WTC11 (cell line): ENCODE measurements at regions of chr16 and their contacts with region 1.

Region 1: DNA sequence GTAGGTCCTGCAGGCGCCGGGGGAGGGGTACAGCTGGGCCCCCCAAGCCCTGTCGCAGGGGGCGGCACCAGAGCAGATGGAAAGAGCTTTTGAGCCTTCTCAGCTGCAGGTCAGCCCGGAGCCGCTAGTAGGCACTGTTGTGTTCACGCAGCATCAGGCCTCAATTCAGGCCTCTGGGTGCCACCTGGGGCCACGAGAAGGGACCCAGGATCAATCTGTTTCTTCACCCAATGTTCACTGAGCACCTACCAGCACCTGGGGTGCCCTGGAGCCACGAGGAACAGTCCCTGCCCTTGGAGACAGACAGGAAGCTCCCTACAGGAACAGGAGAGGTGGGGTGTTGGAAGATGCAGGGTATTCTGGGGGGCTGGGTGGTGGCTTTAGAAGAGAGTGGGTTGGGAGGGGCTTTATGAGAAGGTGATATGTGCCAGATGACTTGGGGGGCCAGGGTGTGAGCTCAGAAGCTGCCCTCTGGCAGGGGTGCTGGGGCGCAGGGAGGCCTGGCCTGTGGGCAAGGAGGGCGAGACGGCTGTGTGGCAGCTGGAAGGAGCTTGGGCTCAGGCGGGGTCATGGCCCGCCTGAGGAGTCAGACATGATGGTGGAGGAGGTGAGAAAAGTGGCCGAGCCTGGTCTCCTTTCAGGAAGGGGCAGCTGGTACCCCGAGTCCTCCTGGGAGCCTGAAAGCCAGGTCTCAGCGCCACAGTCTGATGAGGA is 121.9 kb upstream of the GSE1 start:
- DNase-seq: peak; percentile 78
- ATAC-seq: peak; percentile 66
- H3K4me3 Mint-ChIP-seq: no peak overlapping the region
- H3K27ac Mint-ChIP-seq: peak overlapping the region; percentile 90
- H3K4me1 Mint-ChIP-seq: peaks cover 17% of the 10 kb centered on the region
- H3K27me3 Mint-ChIP-seq: no peaks in the 10 kb centered on the region
- CTCF ChIP-seq: peak; percentile 86

Region 2: DNA sequence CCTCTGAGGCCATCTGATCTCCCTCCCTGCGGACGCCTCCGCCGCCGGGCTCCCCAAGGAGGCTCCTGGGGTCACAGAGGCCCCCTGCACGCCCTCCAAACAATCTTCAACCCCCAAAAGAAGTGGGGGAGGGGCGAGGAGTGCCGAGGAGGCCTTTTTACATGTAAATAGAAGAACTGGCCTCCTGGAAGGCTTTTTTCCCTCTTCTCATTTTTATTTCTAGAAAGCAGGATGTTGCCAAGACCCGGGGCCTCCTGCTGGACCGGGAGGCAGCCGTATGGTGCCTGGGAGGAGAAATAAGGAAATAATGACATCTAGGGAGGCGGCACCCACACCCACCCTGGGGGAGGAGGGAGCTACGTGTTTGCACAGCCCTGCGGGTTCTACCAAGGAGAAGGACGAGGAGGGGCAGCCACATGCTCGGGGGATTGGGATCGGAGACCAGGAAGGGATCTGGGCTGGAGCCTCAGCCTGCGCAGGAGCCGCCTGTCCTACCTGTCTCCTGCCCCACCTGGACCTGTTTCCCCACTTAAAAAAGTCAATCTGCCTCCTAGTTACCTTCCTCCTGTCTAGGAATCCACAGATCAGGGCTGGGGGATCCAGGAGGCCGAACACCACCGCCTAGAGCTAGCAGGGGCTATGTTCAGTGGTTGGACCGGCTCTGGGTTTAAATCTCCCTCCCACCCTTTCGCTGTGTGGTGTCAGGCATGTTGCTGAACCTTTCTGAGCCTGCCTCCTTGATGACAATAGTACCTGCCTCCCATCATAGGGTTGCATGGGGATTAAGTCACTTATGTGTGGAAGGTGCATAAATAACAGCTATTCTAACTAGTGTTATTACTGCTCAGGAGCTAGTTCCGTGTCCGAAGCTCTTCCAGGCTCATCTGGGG is 53.8 kb before region 1 on chr16:
- CTCF ChIA-PET with region 1: interaction called, 15 read pairs
- POLR2A ChIA-PET with region 1: no interaction called
- DNase-seq: no peak
- ATAC-seq: peak; percentile 21
- H3K4me3 Mint-ChIP-seq: peak overlapping the region; percentile 50
- H3K27ac Mint-ChIP-seq: peak overlapping the region; percentile 51; the same call in 1 of the 2 replicates
- H3K4me1 Mint-ChIP-seq: peaks cover 39% of the 10 kb centered on the region
- H3K27me3 Mint-ChIP-seq: no peaks in the 10 kb centered on the region
- CTCF ChIP-seq: no peak

Region 3: GRCh38 chr16:85473909-85474620 is 17.1 kb before region 1 on chr16:
- CTCF ChIA-PET with region 1: interaction called, 22 read pairs
- POLR2A ChIA-PET with region 1: no interaction called
- DNase-seq: no peak
- ATAC-seq: peak; percentile 52
- H3K4me3 Mint-ChIP-seq: no peak overlapping the region
- H3K27ac Mint-ChIP-seq: 0 out of 2 replicates have a peak overlapping the region, but pooled peaks have one; percentile 20
- H3K4me1 Mint-ChIP-seq: peaks cover 25% of the 10 kb centered on the region
- H3K27me3 Mint-ChIP-seq: 0 out of 2 replicates have a peak, but pooled peaks cover 2% of the 10 kb centered on the region
- CTCF ChIP-seq: no peak

Region 4: DNA sequence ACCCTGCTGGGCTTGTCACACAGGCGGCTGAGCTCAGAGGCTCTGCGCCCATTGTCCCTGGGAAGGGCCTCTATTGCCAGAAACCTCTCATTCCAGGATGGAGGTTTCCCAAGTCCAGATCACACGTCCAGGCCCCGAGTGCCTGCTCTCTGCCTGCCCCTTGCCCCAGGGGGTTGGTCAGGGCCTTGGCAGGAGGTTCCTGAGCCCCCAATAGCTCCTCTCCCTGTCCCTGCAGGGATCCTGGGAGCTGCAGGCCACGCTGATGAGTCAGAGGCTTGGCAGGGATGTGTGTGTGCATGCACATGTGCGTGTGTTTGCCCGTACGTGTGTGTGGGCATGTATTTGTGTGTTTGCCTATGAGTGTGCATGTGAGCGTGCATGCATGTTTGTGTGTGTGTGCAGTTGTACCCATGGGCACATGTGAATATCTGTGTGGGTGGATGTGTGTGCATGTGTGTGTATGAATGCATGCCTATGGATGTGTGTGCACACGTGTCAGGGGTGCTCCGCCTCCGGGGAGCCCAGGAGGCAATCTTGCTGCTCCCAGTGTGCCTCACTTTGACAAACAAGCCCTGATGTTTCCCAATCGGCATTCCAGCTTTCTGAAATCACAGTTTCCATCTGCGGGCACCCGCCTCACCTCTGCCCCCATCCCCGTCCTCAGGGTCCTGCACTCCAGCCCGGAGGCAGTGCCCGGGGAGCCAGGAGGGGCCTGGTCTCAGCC is 23.5 kb after region 1 on chr16:
- CTCF ChIA-PET with region 1: interaction called, 31 read pairs
- POLR2A ChIA-PET with region 1: no interaction called
- DNase-seq: no peak
- ATAC-seq: no peak
- H3K4me3 Mint-ChIP-seq: no peak overlapping the region
- H3K27ac Mint-ChIP-seq: peak overlapping the region; percentile 72; the same call in 1 of the 2 replicates
- H3K4me1 Mint-ChIP-seq: peaks cover 22% of the 10 kb centered on the region
- H3K27me3 Mint-ChIP-seq: no peaks in the 10 kb centered on the region
- CTCF ChIP-seq: no peak

Region 5: GRCh38 chr16:85601730-85602401 is 110.7 kb after region 1 on chr16:
- CTCF ChIA-PET with region 1: interaction called, 13 read pairs
- POLR2A ChIA-PET with region 1: no interaction called
- DNase-seq: no peak
- ATAC-seq: 0 out of 2 replicates have a peak, but pooled peaks have one; percentile 11
- H3K4me3 Mint-ChIP-seq: peak overlapping the region; percentile 9; the same call in 1 of the 2 replicates
- H3K27ac Mint-ChIP-seq: no peak overlapping the region
- H3K4me1 Mint-ChIP-seq: peaks cover 74% of the 10 kb centered on the region
- H3K27me3 Mint-ChIP-seq: no peaks in the 10 kb centered on the region
- CTCF ChIP-seq: no peak

Region 6: GRCh38 chr16:85675251-85675927 is 184.2 kb after region 1 on chr16:
- CTCF ChIA-PET with region 1: no interaction called
- POLR2A ChIA-PET with region 1: no interaction called
- DNase-seq: no peak
- ATAC-seq: peak; percentile 53
- H3K4me3 Mint-ChIP-seq: no peak overlapping the region
- H3K27ac Mint-ChIP-seq: no peak overlapping the region
- H3K4me1 Mint-ChIP-seq: no peaks in the 10 kb centered on the region
- H3K27me3 Mint-ChIP-seq: no peaks in the 10 kb centered on the region
- CTCF ChIP-seq: no peak